ENCODE measurements at regions of chr1 and their contacts with region 1.

Region 1: GRCh38 chr1:20212685-20213331 is 26.5 kb upstream of the PLA2G2C start:
- DNase-seq: peak; percentile 20 to 63 (median 47)
- ATAC-seq: peak; percentile 74
- H3K4me3 ChIP-seq: no peak overlapping the region
- H3K4me3 Mint-ChIP-seq: peak overlapping the region in 8 of 10 donors; percentile 32 to 61 (median 54)
- H3K27ac ChIP-seq: no peak overlapping the region
- H3K27ac Mint-ChIP-seq: no peak overlapping the region
- H3K4me1 ChIP-seq: peaks cover 4% of the 10 kb centered on the region in 2 donors
- H3K4me1 Mint-ChIP-seq: peaks cover 0 to 9% (median 2%) of the 10 kb centered on the region in 7 donors
- H3K27me3 ChIP-seq: no peaks in the 10 kb centered on the region
- H3K27me3 Mint-ChIP-seq: peaks cover 20 to 42% (median 35%) of the 10 kb centered on the region in 5 donors

Region 2: GRCh38 chr1:20376880-20377494 is 164.2 kb after region 1 on chr1:
- CTCF ChIA-PET with region 1: no interaction called
- POLR2A ChIA-PET with region 1: no interaction called
- intact Hi-C with region 1: loop called in 1 of 2 experiments (anchors 10 kb)
- DNase-seq: peak in 7 of 9 donors; percentile 14 to 65 (median 36)
- ATAC-seq: peak; percentile 81
- H3K4me3 ChIP-seq: no peak overlapping the region
- H3K4me3 Mint-ChIP-seq: no peak overlapping the region
- H3K27ac ChIP-seq: no peak overlapping the region
- H3K27ac Mint-ChIP-seq: no peak overlapping the region
- H3K4me1 ChIP-seq: no peaks in the 10 kb centered on the region
- H3K4me1 Mint-ChIP-seq: peaks cover 0 to 5% (median 0%) of the 10 kb centered on the region in 7 donors
- H3K27me3 ChIP-seq: no peaks in the 10 kb centered on the region
- H3K27me3 Mint-ChIP-seq: peaks cover 15 to 42% (median 33%) of the 10 kb centered on the region in 5 donors

Region 3: GRCh38 chr1:20430355-20431175 is 217.8 kb after region 1 on chr1:
- CTCF ChIA-PET with region 1: no interaction called
- POLR2A ChIA-PET with region 1: no interaction called
- intact Hi-C with region 1: loop called in 1 of 2 experiments (anchors 2 kb)
- DNase-seq: peak in 7 of 9 donors; percentile 7 to 54 (median 23)
- ATAC-seq: no peak
- H3K4me3 ChIP-seq: no peak overlapping the region
- H3K4me3 Mint-ChIP-seq: no peak overlapping the region
- H3K27ac ChIP-seq: no peak overlapping the region
- H3K27ac Mint-ChIP-seq: no peak overlapping the region
- H3K4me1 ChIP-seq: no peaks in the 10 kb centered on the region
- H3K4me1 Mint-ChIP-seq: peaks cover 0 to 13% (median 0%) of the 10 kb centered on the region in 7 donors
- H3K27me3 ChIP-seq: no peaks in the 10 kb centered on the region
- H3K27me3 Mint-ChIP-seq: peaks cover 32 to 53% (median 50%) of the 10 kb centered on the region in 5 donors